ENCODE measurements at regions of chr1 and their contacts with region 1.

Region 1: DNA sequence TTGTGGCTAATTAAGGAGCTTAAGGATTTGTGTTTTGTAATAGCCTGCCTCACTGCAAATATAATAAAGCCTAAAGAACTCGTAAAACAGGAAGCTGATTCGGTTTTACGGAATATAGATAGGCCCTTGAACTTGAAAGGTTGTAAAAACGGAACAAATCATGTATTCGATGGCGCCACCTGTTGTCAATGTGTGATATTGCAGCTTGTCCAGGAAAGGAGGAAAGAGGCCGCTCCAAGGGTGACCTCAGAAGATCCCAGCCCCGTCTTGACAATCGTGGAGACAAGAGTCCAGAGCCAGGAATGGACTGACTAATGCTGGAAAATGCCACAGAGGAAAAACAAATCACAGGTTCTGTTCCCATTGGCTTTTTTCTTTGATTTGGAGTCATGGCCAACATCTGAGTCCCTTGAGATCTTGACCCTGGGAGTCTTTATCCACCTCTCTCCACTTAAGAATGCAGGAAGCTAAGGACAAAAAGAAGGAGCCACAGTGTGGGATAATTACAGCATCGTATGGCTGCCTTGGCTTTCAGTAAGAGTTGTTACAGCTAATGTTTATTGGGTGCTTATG is 7.0 kb upstream of the IGSF21 start:
- DNase-seq: peak in 1 of 2 experiments; percentile 85
- H3K4me3 ChIP-seq: no peak overlapping the region
- H3K27ac ChIP-seq: no peak overlapping the region
- H3K4me1 ChIP-seq: peaks cover 0 to 5% (median 0%) of the 10 kb centered on the region in 4 experiments; a peak in 1 of 7 replicates
- H3K27me3 ChIP-seq: peaks cover 0 to 18% (median 4%) of the 10 kb centered on the region in 4 experiments; a peak in 4 of 7 replicates
- CTCF ChIP-seq: peak; percentile 55 to 84 (median 70)
- EP300 ChIP-seq: no peak
- POLR2A ChIP-seq: no peak
- RAD21 ChIP-seq: peak; percentile 79 to 87

Region 2: GRCh38 chr1:18058206-18058921 is 42.2 kb before region 1 on chr1:
- CTCF ChIA-PET with region 1: interaction called, 10 read pairs
- POLR2A ChIA-PET with region 1: no interaction called
- DNase-seq: no peak
- H3K4me3 ChIP-seq: no peak overlapping the region
- H3K27ac ChIP-seq: no peak overlapping the region
- H3K4me1 ChIP-seq: no peaks in the 10 kb centered on the region
- H3K27me3 ChIP-seq: peaks cover 0 to 3% (median under 1%) of the 10 kb centered on the region in 4 experiments; a peak in 2 of 7 replicates
- CTCF ChIP-seq: no peak
- EP300 ChIP-seq: no peak
- POLR2A ChIP-seq: no peak
- RAD21 ChIP-seq: no peak

Region 3: GRCh38 chr1:18077657-18078215 is 22.8 kb before region 1 on chr1:
- CTCF ChIA-PET with region 1: interaction called, 14 read pairs
- POLR2A ChIA-PET with region 1: no interaction called
- DNase-seq: no peak
- H3K4me3 ChIP-seq: no peak overlapping the region
- H3K27ac ChIP-seq: no peak overlapping the region
- H3K4me1 ChIP-seq: peaks cover 0 to 7% (median 3%) of the 10 kb centered on the region in 4 experiments; a peak in 2 of 7 replicates
- H3K27me3 ChIP-seq: peaks cover 0 to 3% (median 0%) of the 10 kb centered on the region in 4 experiments; a peak in 1 of 7 replicates
- CTCF ChIP-seq: no peak
- EP300 ChIP-seq: no peak
- POLR2A ChIP-seq: no peak
- RAD21 ChIP-seq: no peak

Measured in H1 (cell line).